Endothelial cell of umbilical vein (primary cell): ENCODE measurements at regions of chr16 and their contacts with region 1.

Region 1: GRCh38 chr16:8567750-8568617 is 22.3 kb downstream of the TMEM114 start:
- DNase-seq: peak; percentile 85
- H3K4me3 ChIP-seq: no peak overlapping the region
- H3K27ac ChIP-seq: no peak overlapping the region
- H3K4me1 ChIP-seq: no peaks in the 10 kb centered on the region
- H3K27me3 ChIP-seq: peaks cover 2 to 3% of the 10 kb centered on the region in 2 experiments
- CTCF ChIP-seq: peak; percentile 87 to 97
- POLR2A ChIP-seq: no peak

Region 2: GRCh38 chr16:8655184-8655717 is 87.3 kb after region 1 on chr16:
- CTCF ChIA-PET with region 1: interaction called, 9 read pairs
- POLR2A ChIA-PET with region 1: no interaction called
- dilution Hi-C with region 1: no loop called
- intact Hi-C with region 1: loop called (anchors 1 kb)
- DNase-seq: peak; percentile 13
- H3K4me3 ChIP-seq: no peak overlapping the region
- H3K27ac ChIP-seq: no peak overlapping the region
- H3K4me1 ChIP-seq: no peaks in the 10 kb centered on the region
- H3K27me3 ChIP-seq: peaks cover 0 to 6% of the 10 kb centered on the region in 2 experiments
- CTCF ChIP-seq: peak; percentile 52 to 58
- POLR2A ChIP-seq: no peak

Region 3: GRCh38 chr16:8797364-8798173 is 229.6 kb after region 1 on chr16 and contains the starts of genes PMM2 and TMEM186:
- CTCF ChIA-PET with region 1: interaction called, 4 read pairs
- POLR2A ChIA-PET with region 1: no interaction called
- dilution Hi-C with region 1: no loop called
- intact Hi-C with region 1: loop called (anchors 1 kb)
- DNase-seq: peak; percentile 98
- H3K4me3 ChIP-seq: peak within 1 kb of the TSS; percentile 65 to 95 (median 83)
- H3K27ac ChIP-seq: peak within 1 kb of the TSS; percentile 62
- H3K4me1 ChIP-seq: peaks cover 25% of the 10 kb centered on the region
- H3K27me3 ChIP-seq: no peaks in the 10 kb centered on the region
- CTCF ChIP-seq: no peak
- POLR2A ChIP-seq: peak; percentile 86
- total RNA-seq, gene PMM2: 61.3 and 62.8 TPM in 2 replicates
- total RNA-seq, gene TMEM186: 8.3 and 9.6 TPM in 2 replicates

Region 4: GRCh38 chr16:8885674-8886592 is 317.9 kb after region 1 on chr16:
- CTCF ChIA-PET with region 1: interaction called, 16 read pairs
- POLR2A ChIA-PET with region 1: no interaction called
- dilution Hi-C with region 1: no loop called
- intact Hi-C with region 1: loop called (anchors 1 kb)
- DNase-seq: peak; percentile 48
- H3K4me3 ChIP-seq: no peak overlapping the region
- H3K27ac ChIP-seq: no peak overlapping the region
- H3K4me1 ChIP-seq: peaks cover 12% of the 10 kb centered on the region
- H3K27me3 ChIP-seq: no peaks in the 10 kb centered on the region
- CTCF ChIP-seq: peak; percentile 15 to 19
- POLR2A ChIP-seq: no peak